AG04449 (cell line): ENCODE measurements at regions of chr16 and their contacts with region 1.

Region 1: GRCh38 chr16:74709441-74709877 is 8.8 kb upstream of the MLKL start:
- DNase-seq: no peak
- H3K4me3 ChIP-seq: no peak overlapping the region
- CTCF ChIP-seq: peak; percentile 93

Region 2: GRCh38 chr16:74695450-74696422 is 13.7 kb before region 1 on chr16:
- CTCF ChIA-PET with region 1: interaction called, 59 read pairs
- POLR2A ChIA-PET with region 1: no interaction called
- DNase-seq: peak; percentile 70
- H3K4me3 ChIP-seq: peak overlapping the region; percentile 43
- CTCF ChIP-seq: no peak

Region 3: GRCh38 chr16:74726716-74727115 is 17.3 kb after region 1 on chr16:
- CTCF ChIA-PET with region 1: interaction called, 93 read pairs
- POLR2A ChIA-PET with region 1: no interaction called
- DNase-seq: no peak
- H3K4me3 ChIP-seq: no peak overlapping the region
- CTCF ChIP-seq: no peak

Region 4: GRCh38 chr16:74793571-74793970 is 84.1 kb after region 1 on chr16:
- CTCF ChIA-PET with region 1: no interaction called
- POLR2A ChIA-PET with region 1: no interaction called
- DNase-seq: no peak
- H3K4me3 ChIP-seq: no peak overlapping the region
- CTCF ChIP-seq: no peak